ENCODE measurements at regions of chr4 and their contacts with region 1.

Region 1: GRCh38 chr4:74133786-74134499 is 24.0 kb upstream of the MTHFD2L start:
- ATAC-seq: peak; percentile 77 to 97 (median 94)
- H3K4me3 ChIP-seq: no peak overlapping the region
- H3K27ac ChIP-seq: no peak overlapping the region
- H3K4me1 ChIP-seq: no peaks in the 10 kb centered on the region

Region 2: GRCh38 chr4:73676861-73677323 is 457.1 kb before region 1 on chr4:
- in situ Hi-C with region 1: loop called in 3 of 9 experiments (anchors 25 kb)
- ATAC-seq: no peak
- H3K4me3 ChIP-seq: no peak overlapping the region
- H3K27ac ChIP-seq: no peak overlapping the region
- H3K4me1 ChIP-seq: no peaks in the 10 kb centered on the region

Region 3: GRCh38 chr4:73816814-73817213 is 317.1 kb before region 1 on chr4:
- in situ Hi-C with region 1: no loop called
- ATAC-seq: peak in 3 of 8 experiments; percentile 82 to 100 (median 89)
- H3K4me3 ChIP-seq: no peak overlapping the region
- H3K27ac ChIP-seq: no peak overlapping the region
- H3K4me1 ChIP-seq: no peaks in the 10 kb centered on the region

Region 4: GRCh38 chr4:74364652-74365491 is 230.9 kb after region 1 on chr4 and contains the start of gene EREG:
- in situ Hi-C with region 1: no loop called
- ATAC-seq: peak; percentile 59 to 97 (median 96)
- H3K4me3 ChIP-seq: peak within 1 kb of the TSS; percentile 17 to 37 (median 20)
- H3K27ac ChIP-seq: no peak within 1 kb of the TSS
- H3K4me1 ChIP-seq: no peaks in the 10 kb centered on the region
- total RNA-seq, gene EREG: 0.09 to 5.7 (median 0.17) TPM in 7 of 8 experiments, not detected in the other

Measured in motor neuron (in vitro differentiated cells).